ENCODE measurements at regions of chr1 and their contacts with region 1.

Region 1: DNA sequence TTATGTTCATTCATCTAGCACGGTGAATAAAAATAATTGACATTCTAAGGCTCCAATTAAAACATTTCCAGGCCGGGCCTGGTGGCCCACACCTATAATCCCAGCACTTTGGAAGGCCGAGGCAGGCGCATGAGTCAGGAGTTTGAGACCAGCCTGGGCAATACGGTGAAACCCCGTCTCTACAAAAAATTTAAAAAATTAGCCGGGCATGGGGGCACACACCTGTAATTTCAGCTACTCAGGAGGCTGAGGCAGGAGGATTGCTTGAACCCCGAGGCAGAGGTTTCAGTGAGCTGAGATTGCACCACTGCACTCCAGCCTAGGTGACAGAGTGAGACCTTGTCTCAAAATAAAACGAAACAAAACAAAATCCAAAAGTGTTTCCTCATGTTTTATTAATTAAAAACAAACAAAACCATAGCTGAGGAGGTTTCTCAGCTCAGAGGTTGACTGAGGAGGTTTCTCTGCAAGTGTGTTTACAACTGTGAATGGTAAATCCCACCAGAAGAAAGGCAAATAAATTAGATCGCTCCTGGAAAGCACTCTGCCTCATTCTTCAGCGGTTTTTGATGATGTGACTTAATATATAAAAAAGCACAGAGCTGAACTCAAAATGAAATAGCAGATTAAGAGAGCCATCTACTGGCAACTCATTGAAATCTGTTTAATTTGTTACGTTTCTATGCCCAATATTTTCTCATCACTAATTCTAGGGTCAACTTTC is 37.7 kb upstream of the ATG4C start:
- DNase-seq: peak in 2 of 5 donors; percentile 60 to 78
- H3K4me3 ChIP-seq: peak overlapping the region in 2 of 3 donors; percentile 26 to 33
- H3K27ac ChIP-seq: no peak overlapping the region
- H3K4me1 ChIP-seq: peaks cover 0 to 2% (median 0%) of the 10 kb centered on the region in 3 donors
- H3K27me3 ChIP-seq: no peaks in the 10 kb centered on the region
- CTCF ChIP-seq: peak; percentile 54

Region 2: GRCh38 chr1:62117018-62117750 is 629.1 kb before region 1 on chr1:
- intact Hi-C with region 1: no loop called
- DNase-seq: no peak
- H3K4me3 ChIP-seq: no peak overlapping the region
- H3K27ac ChIP-seq: no peak overlapping the region
- H3K4me1 ChIP-seq: no peaks in the 10 kb centered on the region
- H3K27me3 ChIP-seq: no peaks in the 10 kb centered on the region
- CTCF ChIP-seq: no peak

Region 3: GRCh38 chr1:62467092-62467491 is 279.2 kb before region 1 on chr1:
- intact Hi-C with region 1: no loop called
- DNase-seq: no peak
- H3K4me3 ChIP-seq: no peak overlapping the region
- H3K27ac ChIP-seq: no peak overlapping the region
- H3K4me1 ChIP-seq: no peaks in the 10 kb centered on the region
- H3K27me3 ChIP-seq: no peaks in the 10 kb centered on the region
- CTCF ChIP-seq: no peak

Region 4: DNA sequence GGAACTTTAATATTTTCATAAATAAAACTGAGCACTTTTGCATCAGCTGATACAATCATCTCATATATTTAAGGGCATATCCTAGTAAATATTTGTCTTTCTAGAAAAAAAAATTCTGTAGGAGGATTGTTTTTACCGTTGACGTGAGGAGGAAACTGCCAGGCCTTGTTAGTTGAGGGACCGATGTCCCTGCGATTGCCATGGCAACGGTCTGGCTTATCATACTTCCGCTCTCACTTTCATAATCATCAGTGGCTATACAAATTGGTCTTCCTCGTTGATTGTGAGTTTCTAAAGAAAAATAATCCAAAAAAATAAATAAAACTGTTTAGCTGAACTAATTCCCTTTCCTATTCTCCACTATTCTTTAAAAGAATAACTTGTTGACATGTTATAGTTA is 218.2 kb before region 1 on chr1:
- intact Hi-C with region 1: loop called (anchors 5 kb)
- DNase-seq: no peak
- H3K4me3 ChIP-seq: no peak overlapping the region
- H3K27ac ChIP-seq: no peak overlapping the region
- H3K4me1 ChIP-seq: no peaks in the 10 kb centered on the region
- H3K27me3 ChIP-seq: no peaks in the 10 kb centered on the region
- CTCF ChIP-seq: no peak

Region 5: GRCh38 chr1:62841587-62842169 is 95.4 kb after region 1 on chr1:
- intact Hi-C with region 1: no loop called
- DNase-seq: peak in 3 of 5 donors; percentile 24 to 82 (median 79)
- H3K4me3 ChIP-seq: no peak overlapping the region
- H3K27ac ChIP-seq: no peak overlapping the region
- H3K4me1 ChIP-seq: no peaks in the 10 kb centered on the region
- H3K27me3 ChIP-seq: no peaks in the 10 kb centered on the region
- CTCF ChIP-seq: peak; percentile 73

Region 6: DNA sequence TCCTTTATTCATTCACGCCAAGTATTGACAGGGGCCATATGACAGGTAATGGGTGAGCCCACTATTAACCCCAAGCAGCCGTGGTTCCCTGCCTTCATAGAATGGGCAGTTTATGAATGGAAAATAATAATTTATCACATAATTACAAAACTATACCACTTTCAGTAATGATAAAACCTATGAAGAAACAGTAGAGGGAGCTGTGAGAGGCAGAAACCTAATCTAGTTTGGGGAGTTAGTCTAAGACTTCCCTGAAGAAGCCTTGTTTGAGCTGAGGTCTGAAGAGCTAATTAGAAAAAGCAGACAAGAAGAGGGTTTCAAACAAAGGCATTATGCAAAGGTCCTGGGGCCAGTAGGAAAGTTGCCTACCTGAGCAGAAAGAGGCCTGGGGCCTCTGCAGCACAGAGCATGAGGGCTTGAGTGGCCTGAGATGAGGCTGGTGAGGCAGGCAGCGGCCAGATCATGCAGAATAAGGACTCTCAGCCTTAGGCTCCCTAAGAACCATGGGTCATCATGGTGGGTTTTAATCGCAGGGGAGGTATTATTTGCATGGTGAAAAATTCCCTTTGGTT is 180.5 kb after region 1 on chr1:
- intact Hi-C with region 1: no loop called
- DNase-seq: no peak
- H3K4me3 ChIP-seq: no peak overlapping the region
- H3K27ac ChIP-seq: no peak overlapping the region
- H3K4me1 ChIP-seq: no peaks in the 10 kb centered on the region
- H3K27me3 ChIP-seq: no peaks in the 10 kb centered on the region
- CTCF ChIP-seq: no peak

Measured in kidney (tissue), 22 donors.